ENCODE measurements at regions of chr1 and their contacts with region 1.

Region 1: GRCh38 chr1:156728597-156729462 is at the start of gene ISG20L2:
- DNase-seq: peak; percentile 96
- H3K4me3 ChIP-seq: peak within 1 kb of the TSS; percentile 77 to 96 (median 90)
- H3K27ac ChIP-seq: peak within 1 kb of the TSS; percentile 87
- H3K4me1 ChIP-seq: peaks cover 41% of the 10 kb centered on the region
- H3K27me3 ChIP-seq: no peaks in the 10 kb centered on the region
- CTCF ChIP-seq: no peak
- total RNA-seq, gene ISG20L2: 27.0 to 42.7 TPM

Region 2: DNA sequence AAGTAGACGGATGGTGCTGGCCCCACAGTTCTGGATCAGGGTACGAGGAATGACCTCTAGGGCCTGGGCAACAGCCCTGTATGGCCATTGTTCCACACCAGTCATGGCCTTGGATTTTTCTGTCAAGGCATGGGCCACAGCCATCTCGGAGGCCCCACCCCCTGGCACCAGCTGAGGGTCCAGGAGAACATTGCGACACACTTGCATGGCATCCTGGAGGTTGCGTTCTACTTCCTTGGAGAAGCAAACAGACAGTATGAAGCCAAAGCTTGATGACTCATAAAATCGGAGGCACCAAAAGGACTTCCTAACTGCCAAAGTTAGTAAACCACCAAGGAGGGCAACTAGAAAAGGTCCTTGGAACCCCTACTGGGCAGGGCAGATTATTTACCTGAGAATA is 417.9 kb before region 1 on chr1:
- CTCF ChIA-PET with region 1: no interaction called
- dilution Hi-C with region 1: no loop called
- in situ Hi-C with region 1: no loop called
- intact Hi-C with region 1: no loop called
- DNase-seq: no peak
- H3K4me3 ChIP-seq: no peak overlapping the region
- H3K27ac ChIP-seq: no peak overlapping the region
- H3K4me1 ChIP-seq: no peaks in the 10 kb centered on the region
- H3K27me3 ChIP-seq: no peaks in the 10 kb centered on the region
- CTCF ChIP-seq: no peak

Region 3: GRCh38 chr1:156608036-156608674 is 120.7 kb before region 1 on chr1:
- CTCF ChIA-PET with region 1: no interaction called
- dilution Hi-C with region 1: no loop called
- in situ Hi-C with region 1: no loop called
- intact Hi-C with region 1: no loop called
- DNase-seq: peak; percentile 60
- H3K4me3 ChIP-seq: no peak overlapping the region
- H3K27ac ChIP-seq: no peak overlapping the region
- H3K4me1 ChIP-seq: peaks cover under 1% of the 10 kb centered on the region
- H3K27me3 ChIP-seq: no peaks in the 10 kb centered on the region
- CTCF ChIP-seq: peak; percentile 85 to 95

Region 4: DNA sequence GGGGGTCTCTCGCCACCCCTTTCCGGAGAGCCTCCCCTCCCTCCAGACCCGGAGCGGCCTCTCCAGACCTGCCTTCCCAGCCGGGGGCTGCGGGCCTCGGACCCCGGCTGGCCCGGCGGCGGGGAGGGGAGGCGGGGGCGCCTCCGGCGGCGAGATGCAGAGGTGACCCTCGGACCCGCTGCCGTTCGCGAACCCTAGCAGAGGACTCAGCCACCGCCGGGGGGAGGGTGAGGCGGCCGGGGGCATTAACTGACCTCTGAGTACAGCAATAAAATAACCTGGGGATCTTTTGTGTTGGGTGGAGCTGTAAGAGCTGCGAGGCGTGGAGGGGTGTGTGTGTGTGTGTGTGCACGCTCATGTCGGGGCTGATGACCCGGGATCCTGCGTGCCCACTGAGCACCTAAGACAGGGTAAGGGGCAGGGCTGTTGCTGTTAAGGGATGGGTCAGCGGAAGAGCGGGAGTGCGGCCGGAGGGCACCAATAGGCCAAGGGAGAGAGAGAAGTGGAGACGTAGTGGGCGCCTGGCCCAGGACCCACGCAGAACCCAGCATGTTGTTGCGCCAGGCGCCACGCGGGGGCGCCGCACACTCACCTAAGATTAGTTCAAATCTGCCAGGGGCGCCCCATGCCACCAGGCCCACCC is 103.3 kb before region 1 on chr1:
- CTCF ChIA-PET with region 1: interaction called, 4 read pairs
- dilution Hi-C with region 1: no loop called
- in situ Hi-C with region 1: no loop called
- intact Hi-C with region 1: loop called (anchors 1 kb)
- DNase-seq: no peak
- H3K4me3 ChIP-seq: no peak overlapping the region
- H3K27ac ChIP-seq: no peak overlapping the region
- H3K4me1 ChIP-seq: peaks cover 20% of the 10 kb centered on the region
- H3K27me3 ChIP-seq: peaks cover 19% of the 10 kb centered on the region
- CTCF ChIP-seq: peak; percentile 58 to 75

Region 5: GRCh38 chr1:156689035-156689952 is 39.5 kb before region 1 on chr1:
- CTCF ChIA-PET with region 1: interaction called, 50 read pairs
- dilution Hi-C with region 1: no loop called
- in situ Hi-C with region 1: no loop called
- intact Hi-C with region 1: loop called (anchors 1 kb)
- DNase-seq: peak; percentile 77
- H3K4me3 ChIP-seq: peak overlapping the region in 1 of 3 experiments; percentile 27
- H3K27ac ChIP-seq: no peak overlapping the region
- H3K4me1 ChIP-seq: peaks cover 49% of the 10 kb centered on the region
- H3K27me3 ChIP-seq: no peaks in the 10 kb centered on the region
- CTCF ChIP-seq: peak; percentile 85 to 94

Region 6: DNA sequence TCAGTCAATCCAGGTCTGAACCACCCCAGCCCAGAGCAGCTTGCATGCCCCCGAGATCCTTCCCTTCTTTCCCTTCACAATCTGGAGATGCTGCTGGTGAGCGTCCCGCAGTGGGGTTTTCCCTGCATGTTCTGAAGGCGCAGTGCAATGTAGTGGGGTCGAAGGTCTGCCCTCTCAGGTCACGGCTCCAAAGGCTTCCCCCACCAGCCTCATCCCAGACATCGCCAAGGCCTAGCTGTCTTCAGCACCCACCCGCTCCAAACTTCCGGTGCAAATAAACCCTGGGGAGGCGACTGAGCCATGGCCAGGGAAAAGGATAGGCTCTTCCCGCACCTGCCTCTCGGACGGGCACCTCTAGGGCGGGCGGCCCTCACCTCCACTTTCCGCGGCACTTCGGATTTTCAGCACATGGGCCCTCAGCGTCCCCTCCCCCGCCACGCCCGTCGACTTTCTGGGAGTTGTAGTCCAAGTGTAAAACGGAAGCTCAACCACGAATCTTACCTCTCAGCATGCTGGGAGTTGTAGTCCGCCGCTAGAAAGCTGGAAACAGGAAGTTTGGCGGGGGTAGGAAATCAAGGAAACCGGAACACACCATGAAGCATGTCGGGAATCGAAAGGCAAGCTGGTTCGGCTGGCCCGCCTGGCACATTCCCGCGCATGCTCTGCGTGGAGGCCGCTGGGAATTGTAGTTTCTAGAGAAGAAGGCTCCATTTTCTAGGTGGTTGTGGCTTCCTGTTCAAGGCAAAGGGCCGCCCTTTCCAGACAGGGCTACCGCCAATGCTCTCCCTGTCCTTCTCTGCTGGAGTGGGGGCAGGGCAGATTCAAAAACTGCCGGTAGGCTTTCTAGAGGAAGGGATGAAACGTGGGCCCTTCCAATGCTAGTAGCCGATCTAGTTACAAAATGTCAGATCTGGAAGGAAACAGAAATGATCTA is 12.1 kb after region 1 on chr1 and contains the start of gene MRPL24:
- CTCF ChIA-PET with region 1: no interaction called
- dilution Hi-C with region 1: no loop called
- in situ Hi-C with region 1: no loop called
- intact Hi-C with region 1: loop called (anchors 1 kb)
- DNase-seq: peak; percentile 100
- H3K4me3 ChIP-seq: peak within 1 kb of the TSS; percentile 50 to 85 (median 73)
- H3K27ac ChIP-seq: peak within 1 kb of the TSS; percentile 37
- H3K4me1 ChIP-seq: peaks cover 13% of the 10 kb centered on the region
- H3K27me3 ChIP-seq: no peaks in the 10 kb centered on the region
- CTCF ChIP-seq: no peak
- total RNA-seq, gene MRPL24: 25.0 to 86.1 TPM

Region 7: DNA sequence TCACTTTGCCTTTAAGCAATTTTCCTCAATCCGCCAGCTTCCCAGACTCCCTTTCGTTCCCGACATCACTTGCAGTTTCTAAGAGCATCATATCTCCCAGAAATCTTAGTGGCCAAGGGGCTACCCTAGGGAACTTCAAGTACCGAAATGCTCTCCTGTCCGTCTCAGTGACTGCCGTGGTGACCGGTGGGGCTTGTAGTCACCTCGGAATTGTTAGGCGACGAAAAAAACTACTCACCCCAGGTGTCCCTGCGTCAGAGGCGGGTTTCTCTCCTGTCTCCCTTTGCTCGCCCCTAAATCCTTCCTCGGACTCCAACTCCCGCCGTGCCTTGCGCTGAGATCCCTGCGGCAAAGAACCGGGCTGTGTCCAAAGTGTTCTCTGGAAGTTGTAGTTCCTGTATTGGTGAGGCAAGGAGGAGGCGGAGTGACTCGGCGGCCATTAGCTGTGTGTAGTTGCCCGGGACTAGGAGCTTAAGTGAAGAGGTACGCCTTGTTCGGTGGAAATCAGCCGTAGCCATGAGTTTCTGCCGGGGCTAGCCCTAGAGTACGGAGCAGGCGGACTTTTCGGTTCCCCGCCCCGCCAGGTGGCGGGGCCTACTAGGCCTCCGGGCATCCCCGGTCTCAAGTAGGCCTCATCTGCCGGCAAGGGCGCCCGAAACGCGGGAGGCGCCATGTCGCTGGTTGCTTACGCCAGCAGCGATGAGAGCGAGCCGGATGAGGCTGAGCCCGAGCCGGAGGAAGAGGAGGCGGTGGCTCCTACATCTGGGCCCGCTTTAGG is 38.5 kb after region 1 on chr1 and contains the start of gene PRCC:
- CTCF ChIA-PET with region 1: interaction called, 5 read pairs
- dilution Hi-C with region 1: loop called (anchors 5 kb)
- in situ Hi-C with region 1: no loop called
- intact Hi-C with region 1: loop called (anchors 1 kb)
- DNase-seq: peak; percentile 100
- H3K4me3 ChIP-seq: peak within 1 kb of the TSS; percentile 65 to 99 (median 91)
- H3K27ac ChIP-seq: peak within 1 kb of the TSS; percentile 86
- H3K4me1 ChIP-seq: peaks cover 20% of the 10 kb centered on the region
- H3K27me3 ChIP-seq: no peaks in the 10 kb centered on the region
- CTCF ChIP-seq: no peak
- total RNA-seq, gene PRCC: 22.2 to 69.7 TPM

Region 8: GRCh38 chr1:156860113-156860627 is 131.3 kb after region 1 on chr1:
- CTCF ChIA-PET with region 1: interaction called, 14 read pairs
- dilution Hi-C with region 1: no loop called
- in situ Hi-C with region 1: no loop called
- intact Hi-C with region 1: loop called (anchors 1 kb)
- DNase-seq: peak; percentile 49
- H3K4me3 ChIP-seq: peak overlapping the region; percentile 31 to 46 (median 38)
- H3K27ac ChIP-seq: no peak overlapping the region
- H3K4me1 ChIP-seq: peaks cover 10% of the 10 kb centered on the region
- H3K27me3 ChIP-seq: peaks cover 27% of the 10 kb centered on the region
- CTCF ChIP-seq: peak; percentile 57 to 83

Measured in mammary epithelial cell (primary cell).